ENCODE measurements at regions of chr11 and their contacts with region 1.

Region 1: DNA sequence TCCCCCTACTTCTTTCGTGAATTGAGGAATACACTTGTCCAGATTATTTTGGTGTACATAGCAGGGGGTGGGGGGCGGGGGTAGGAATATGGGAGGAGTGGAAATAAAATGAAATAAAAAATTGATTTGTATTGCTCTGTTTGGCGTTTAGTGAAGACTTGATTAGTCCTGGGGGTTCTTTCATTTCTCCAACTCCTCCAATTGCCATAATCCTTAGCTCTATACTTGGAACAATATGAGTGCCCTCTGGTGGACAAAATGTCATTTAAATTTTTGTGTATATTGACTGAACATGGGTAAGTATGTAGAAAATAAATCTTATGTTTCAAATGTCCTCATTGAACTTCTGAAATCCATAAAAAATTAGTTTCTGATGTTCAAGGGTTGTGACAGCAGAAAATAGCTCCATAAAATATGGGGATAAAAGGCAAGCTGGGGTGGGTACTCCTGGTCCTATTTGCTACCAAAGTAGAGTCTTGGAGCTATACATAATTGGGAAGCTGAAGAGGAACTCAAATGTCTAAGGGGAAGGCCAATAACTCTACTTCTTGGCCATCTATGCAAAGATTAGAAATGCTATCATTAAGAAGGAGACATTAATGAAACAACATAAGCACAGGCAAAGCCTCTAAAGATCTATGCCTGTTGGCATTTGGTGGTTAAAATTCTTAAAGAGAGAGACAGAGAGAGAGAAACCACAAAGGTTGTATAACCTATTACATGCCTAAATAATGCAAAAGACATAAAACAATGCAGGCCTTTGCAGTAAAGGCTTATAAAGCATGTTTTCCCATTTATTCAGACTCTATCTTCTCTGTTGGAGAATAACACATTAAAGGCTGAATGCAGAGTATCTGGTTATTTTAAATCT is 421.6 kb downstream of the METTL15 start:
- DNase-seq: peak; percentile 22
- H3K4me3 Mint-ChIP-seq: no peak overlapping the region
- H3K27ac Mint-ChIP-seq: no peak overlapping the region
- H3K4me1 Mint-ChIP-seq: no peaks in the 10 kb centered on the region
- H3K27me3 Mint-ChIP-seq: no peaks in the 10 kb centered on the region
- CTCF ChIP-seq: peak; percentile 10

Region 2: DNA sequence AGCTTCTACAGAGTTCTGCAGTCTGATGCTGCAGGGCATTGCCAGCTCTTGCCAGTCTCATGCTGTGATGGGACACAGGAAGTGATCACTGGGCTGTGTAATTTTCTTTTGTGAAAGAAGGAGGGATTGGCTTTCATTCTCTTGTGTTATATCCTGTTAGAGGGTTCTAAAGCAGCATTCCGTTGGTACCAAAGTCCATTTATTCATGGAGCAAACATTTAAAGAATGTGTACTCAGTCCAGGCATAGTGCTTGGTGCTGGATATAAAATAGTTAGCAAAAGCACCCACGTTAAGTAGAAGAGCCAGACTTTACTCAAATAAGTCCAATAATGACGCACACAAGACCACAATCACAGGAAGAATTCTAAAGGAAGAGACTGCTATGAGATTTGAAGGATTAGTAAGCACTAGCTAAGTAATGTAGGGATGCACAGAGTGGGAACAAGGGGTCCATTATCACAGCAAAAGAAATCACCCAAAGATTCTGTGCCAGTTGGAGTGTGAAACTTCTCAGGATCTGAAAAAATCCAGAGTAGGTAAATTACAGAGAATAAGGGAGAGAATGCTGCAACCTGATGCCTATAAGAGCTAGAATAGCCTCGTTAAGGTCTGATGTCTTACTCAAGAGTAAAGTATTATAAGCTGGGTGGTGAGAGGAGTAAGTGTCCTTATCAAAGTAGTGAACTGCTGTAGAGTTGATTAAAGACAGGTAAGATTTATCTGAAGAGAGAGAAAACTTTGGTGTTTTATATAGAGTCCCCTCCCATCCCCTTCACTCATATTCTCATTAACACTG is 306.7 kb after region 1 on chr11:
- CTCF ChIA-PET with region 1: interaction called, 3 read pairs
- intact Hi-C with region 1: loop called (anchors 10 kb)
- DNase-seq: peak; percentile 60
- H3K4me3 Mint-ChIP-seq: peak overlapping the region; percentile 59
- H3K27ac Mint-ChIP-seq: peak overlapping the region; percentile 96
- H3K4me1 Mint-ChIP-seq: peaks cover 55% of the 10 kb centered on the region
- H3K27me3 Mint-ChIP-seq: no peaks in the 10 kb centered on the region
- CTCF ChIP-seq: no peak